ENCODE measurements at regions of chr2 and their contacts with region 1.

Region 1: GRCh38 chr2:33763671-33764310 is 164.7 kb upstream of the FAM98A start:
- DNase-seq: no peak
- H3K4me3 Mint-ChIP-seq: no peak overlapping the region
- H3K27ac Mint-ChIP-seq: no peak overlapping the region
- H3K4me1 Mint-ChIP-seq: no peaks in the 10 kb centered on the region
- H3K27me3 Mint-ChIP-seq: no peaks in the 10 kb centered on the region

Region 2: DNA sequence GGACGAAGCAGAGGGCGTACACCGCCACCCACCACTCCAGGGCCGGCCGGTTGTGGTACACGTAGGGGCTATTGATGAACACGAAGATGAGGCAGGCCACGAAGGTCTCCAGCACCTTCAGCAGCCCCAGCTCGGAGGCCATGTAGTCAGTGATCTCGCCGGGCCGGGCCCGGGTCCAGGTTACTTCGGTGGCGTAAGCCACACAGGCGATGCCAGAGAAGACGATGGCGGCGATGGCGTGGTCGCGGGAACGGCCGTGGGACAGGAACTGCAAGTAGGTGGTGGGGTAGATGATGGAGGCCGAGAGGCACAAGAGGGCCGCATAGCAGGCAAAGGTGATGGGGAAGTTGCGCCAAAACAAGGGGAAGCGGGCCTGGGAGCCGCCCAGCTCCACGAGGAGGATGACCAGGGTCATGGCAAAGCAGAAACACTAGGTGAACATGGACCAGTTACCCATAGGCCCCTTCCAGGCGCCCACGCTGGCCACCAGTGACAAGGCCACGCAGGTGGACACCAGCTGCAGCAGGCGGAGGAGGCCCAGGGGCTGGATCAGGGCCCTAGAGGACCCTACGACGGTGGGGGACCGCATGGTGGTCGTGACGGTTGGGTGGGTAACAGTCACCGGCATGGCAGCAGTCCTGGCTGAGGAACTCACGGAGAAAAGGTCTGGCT is 36.3 kb before region 1 on chr2:
- intact Hi-C with region 1: no loop called
- DNase-seq: no peak
- H3K4me3 Mint-ChIP-seq: no peak overlapping the region
- H3K27ac Mint-ChIP-seq: no peak overlapping the region
- H3K4me1 Mint-ChIP-seq: no peaks in the 10 kb centered on the region
- H3K27me3 Mint-ChIP-seq: no peaks in the 10 kb centered on the region

Region 3: DNA sequence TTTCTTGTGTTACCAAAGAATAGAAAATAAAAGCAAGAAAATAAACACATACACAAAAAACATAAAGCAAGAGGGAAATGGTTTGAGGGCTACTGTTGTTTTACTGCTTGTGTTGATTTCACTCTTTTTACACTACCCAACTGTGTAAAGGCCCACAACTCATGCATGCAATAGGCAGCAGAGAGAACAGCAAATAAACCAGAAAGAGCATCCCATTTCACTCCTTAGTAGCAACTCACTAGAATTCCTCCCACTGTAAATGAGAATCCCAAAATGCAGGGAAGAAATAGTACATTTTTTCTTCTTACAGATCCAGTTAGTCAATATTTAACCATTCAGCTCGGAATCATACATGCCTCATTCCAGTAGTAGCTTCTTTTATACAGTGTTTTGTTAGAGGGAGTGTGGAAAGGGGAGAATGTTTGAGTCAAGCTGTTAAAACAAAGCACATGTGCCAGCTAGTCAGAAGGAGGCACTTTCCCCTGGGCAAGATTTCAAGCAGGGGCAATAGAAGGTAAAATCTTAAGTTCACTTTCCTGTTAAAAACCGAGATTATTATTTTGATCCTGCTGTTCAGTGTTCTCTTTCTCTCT is 17.5 kb before region 1 on chr2:
- intact Hi-C with region 1: loop called (anchors 1 kb)
- DNase-seq: no peak
- H3K4me3 Mint-ChIP-seq: no peak overlapping the region
- H3K27ac Mint-ChIP-seq: no peak overlapping the region
- H3K4me1 Mint-ChIP-seq: no peaks in the 10 kb centered on the region
- H3K27me3 Mint-ChIP-seq: no peaks in the 10 kb centered on the region